ENCODE measurements at regions of chr2 and their contacts with region 1.

Region 1: DNA sequence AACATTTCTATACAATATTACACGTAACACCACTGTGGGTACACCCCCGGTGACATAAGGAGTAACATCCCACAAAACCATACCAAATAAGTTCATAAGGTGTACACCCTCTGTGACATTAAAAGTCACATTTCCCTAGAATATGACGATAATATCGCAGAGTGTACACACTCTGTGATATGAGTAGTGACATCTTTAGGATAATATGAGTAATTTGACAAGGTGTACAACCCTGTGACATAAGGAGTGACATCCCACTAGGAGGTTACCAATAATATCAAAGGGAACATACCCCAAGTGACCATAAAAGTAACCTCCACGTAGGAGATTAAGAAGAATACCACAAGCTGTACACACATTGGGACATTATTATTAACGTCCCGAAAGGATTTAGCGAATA is 24.0 kb upstream of the TEX261 start:
- DNase-seq: no peak
- ATAC-seq: no peak
- H3K4me3 Mint-ChIP-seq: no peak overlapping the region
- H3K27ac Mint-ChIP-seq: no peak overlapping the region
- H3K4me1 Mint-ChIP-seq: peaks cover 7% of the 10 kb centered on the region
- H3K27me3 Mint-ChIP-seq: no peaks in the 10 kb centered on the region

Region 2: GRCh38 chr2:70975091-70975636 is 43.5 kb before region 1 on chr2:
- CTCF ChIA-PET with region 1: no interaction called
- POLR2A ChIA-PET with region 1: no interaction called
- DNase-seq: peak; percentile 16
- ATAC-seq: no peak
- H3K4me3 Mint-ChIP-seq: no peak overlapping the region
- H3K27ac Mint-ChIP-seq: no peak overlapping the region
- H3K4me1 Mint-ChIP-seq: peaks cover 17% of the 10 kb centered on the region
- H3K27me3 Mint-ChIP-seq: peaks cover 23% of the 10 kb centered on the region

Region 3: DNA sequence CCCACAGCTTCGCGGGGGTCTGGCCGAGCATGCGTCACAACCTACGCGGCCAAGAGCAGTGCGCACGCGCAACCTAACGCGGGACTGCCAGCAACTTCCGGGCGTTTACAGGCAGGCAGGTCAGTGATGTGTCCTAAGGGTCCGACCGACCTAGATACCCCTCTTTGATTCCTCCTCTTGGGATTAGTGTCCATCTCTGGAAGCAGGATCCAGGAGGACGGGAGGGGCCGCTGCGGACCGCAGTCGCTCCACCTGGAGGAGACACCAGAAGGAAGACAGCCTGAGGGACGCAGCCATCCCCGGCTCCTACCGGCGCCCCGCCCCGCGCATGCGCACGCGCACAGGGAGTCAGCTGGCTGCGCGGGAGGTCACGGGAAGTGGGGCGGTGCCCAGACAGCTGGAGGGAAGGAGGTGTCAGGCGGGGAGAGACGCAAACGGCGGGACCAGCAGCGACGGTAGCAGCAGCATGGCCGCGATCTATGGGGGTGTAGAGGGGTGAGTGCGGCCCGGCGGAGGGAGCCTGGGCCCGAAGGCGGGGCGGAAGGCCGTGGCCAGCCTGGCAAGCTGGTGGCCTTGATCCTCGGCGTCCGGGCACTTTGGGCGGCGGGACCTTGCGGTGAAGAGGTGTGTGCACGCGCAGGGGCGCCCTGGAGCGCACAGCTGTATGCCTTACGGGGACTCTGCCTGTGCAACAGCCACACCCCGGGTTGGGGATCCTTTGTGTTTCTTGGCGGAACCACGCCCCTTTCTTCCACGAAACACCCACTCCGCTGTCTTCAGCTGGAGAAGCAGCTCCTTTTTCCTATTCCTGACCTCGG is 49.8 kb after region 1 on chr2 and contains the start of gene NAGK:
- CTCF ChIA-PET with region 1: no interaction called
- POLR2A ChIA-PET with region 1: no interaction called
- DNase-seq: peak; percentile 97
- ATAC-seq: peak; percentile 90
- H3K4me3 Mint-ChIP-seq: peak within 1 kb of the TSS; percentile 96
- H3K27ac Mint-ChIP-seq: peak within 1 kb of the TSS; percentile 99
- H3K4me1 Mint-ChIP-seq: peaks cover 56% of the 10 kb centered on the region
- H3K27me3 Mint-ChIP-seq: no peaks in the 10 kb centered on the region
- total RNA-seq, gene NAGK: 68.3 to 75.3 TPM

Region 4: DNA sequence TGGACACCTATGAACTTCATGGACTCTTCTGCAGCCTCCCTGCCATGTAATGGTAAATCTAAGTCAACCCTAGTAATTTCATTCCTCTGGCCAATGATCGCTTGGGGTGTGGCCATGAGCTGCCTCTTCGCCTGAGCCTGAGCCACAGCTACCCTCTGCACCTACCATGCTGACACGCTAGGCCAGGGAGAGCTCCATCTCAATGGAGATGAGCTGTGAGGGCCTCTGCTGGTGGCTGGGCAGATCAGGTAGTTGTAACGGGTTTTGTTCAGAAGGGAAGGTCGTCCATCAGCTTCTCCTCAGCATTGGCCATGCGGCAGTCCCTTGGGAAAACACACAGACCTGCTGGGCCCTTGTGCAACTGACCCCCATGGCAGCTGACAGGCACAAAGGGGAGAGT is 136.2 kb after region 1 on chr2:
- CTCF ChIA-PET with region 1: interaction called, 11 read pairs
- POLR2A ChIA-PET with region 1: no interaction called
- DNase-seq: peak; percentile 35
- ATAC-seq: peak; percentile 67
- H3K4me3 Mint-ChIP-seq: no peak overlapping the region
- H3K27ac Mint-ChIP-seq: no peak overlapping the region
- H3K4me1 Mint-ChIP-seq: peaks cover 6% of the 10 kb centered on the region
- H3K27me3 Mint-ChIP-seq: peaks cover 3% of the 10 kb centered on the region